HepG2 (cell line): ENCODE measurements at regions of chr10 and their contacts with region 1.

Region 1: DNA sequence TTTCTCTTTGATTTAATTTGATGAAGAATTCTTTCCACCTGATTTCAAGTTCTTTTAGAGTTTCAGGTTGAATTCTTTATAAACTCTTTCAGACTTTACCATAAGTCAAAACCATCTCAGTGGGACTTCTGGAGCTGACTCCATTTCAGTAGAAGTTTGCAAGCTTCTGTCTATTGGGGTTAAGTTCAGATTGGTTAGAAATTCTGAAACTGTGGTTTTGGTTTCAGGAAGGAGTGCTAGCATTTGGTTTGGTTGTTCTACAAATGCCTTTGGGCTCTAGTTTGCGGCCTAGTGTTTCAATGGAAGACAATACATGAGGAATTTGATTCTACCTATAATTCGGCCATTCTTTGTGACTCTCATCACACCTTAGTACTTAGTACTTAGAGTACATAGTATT is 176.8 kb upstream of the RHOBTB1 start:
- DNase-seq: no peak
- ATAC-seq: no peak
- H3K4me3 ChIP-seq: no peak overlapping the region
- H3K27ac ChIP-seq: no peak overlapping the region
- H3K4me1 ChIP-seq: no peaks in the 10 kb centered on the region
- H3K27me3 ChIP-seq: no peaks in the 10 kb centered on the region
- CTCF ChIP-seq: no peak
- EP300 ChIP-seq: no peak
- POLR2A ChIP-seq: no peak
- RAD21 ChIP-seq: no peak

Region 2: DNA sequence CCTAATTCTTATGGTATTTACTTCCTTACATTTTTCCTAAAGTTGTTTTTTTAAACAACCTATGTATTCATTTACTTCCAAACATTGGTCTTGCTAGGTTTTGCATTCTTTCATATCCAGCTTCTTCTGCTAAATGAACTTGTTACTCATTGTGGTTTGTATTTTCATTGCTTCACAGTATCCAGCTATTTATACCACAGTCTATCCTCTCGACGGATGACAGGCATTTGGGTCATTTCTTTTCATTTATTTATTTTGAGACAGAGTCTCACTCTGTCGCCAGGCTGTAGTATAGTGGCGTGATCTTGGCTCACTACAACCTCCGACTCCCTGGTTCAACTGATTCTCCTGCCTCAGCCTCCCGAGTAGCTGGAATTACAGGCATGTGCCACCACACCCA is 1281.2 kb before region 1 on chr10:
- CTCF ChIA-PET with region 1: no interaction called
- POLR2A ChIA-PET with region 1: no interaction called
- in situ Hi-C with region 1: no loop called
- intact Hi-C with region 1: no loop called
- DNase-seq: no peak
- ATAC-seq: no peak
- H3K4me3 ChIP-seq: no peak overlapping the region
- H3K27ac ChIP-seq: no peak overlapping the region
- H3K4me1 ChIP-seq: no peaks in the 10 kb centered on the region
- H3K27me3 ChIP-seq: no peaks in the 10 kb centered on the region
- CTCF ChIP-seq: no peak
- EP300 ChIP-seq: no peak
- POLR2A ChIP-seq: no peak
- RAD21 ChIP-seq: no peak

Region 3: DNA sequence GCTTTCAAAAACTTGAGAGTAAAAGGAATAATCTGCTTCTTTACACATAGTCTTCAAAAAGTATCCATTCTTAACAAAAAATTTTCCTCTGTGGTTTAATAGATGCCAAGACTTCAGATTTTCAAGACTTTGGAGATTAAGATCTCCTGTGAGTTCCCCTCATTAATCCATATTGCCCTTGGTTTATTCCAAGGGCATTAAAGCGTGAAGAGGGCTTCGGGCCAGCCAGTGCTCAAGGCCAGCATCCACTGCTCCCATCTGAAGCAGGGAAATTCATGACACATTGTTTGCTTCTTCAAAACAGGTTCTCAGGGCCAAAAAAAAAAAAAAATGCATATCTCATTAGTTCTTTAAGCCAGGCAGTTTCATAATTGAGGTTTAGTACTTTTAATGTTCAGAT is 39.5 kb before region 1 on chr10:
- CTCF ChIA-PET with region 1: no interaction called
- POLR2A ChIA-PET with region 1: no interaction called
- in situ Hi-C with region 1: no loop called
- intact Hi-C with region 1: no loop called
- DNase-seq: no peak
- ATAC-seq: no peak
- H3K4me3 ChIP-seq: no peak overlapping the region
- H3K27ac ChIP-seq: no peak overlapping the region
- H3K4me1 ChIP-seq: peaks cover 13% of the 10 kb centered on the region
- H3K27me3 ChIP-seq: no peaks in the 10 kb centered on the region
- CTCF ChIP-seq: no peak
- EP300 ChIP-seq: no peak
- POLR2A ChIP-seq: no peak
- RAD21 ChIP-seq: no peak

Region 4: GRCh38 chr10:61097026-61097425 is 23.8 kb before region 1 on chr10:
- CTCF ChIA-PET with region 1: no interaction called
- POLR2A ChIA-PET with region 1: no interaction called
- in situ Hi-C with region 1: no loop called
- intact Hi-C with region 1: loop called (anchors 1 kb)
- DNase-seq: no peak
- ATAC-seq: no peak
- H3K4me3 ChIP-seq: no peak overlapping the region
- H3K27ac ChIP-seq: no peak overlapping the region
- H3K4me1 ChIP-seq: no peaks in the 10 kb centered on the region
- H3K27me3 ChIP-seq: no peaks in the 10 kb centered on the region
- CTCF ChIP-seq: no peak
- EP300 ChIP-seq: no peak
- POLR2A ChIP-seq: no peak
- RAD21 ChIP-seq: no peak